ENCODE measurements at regions of chr9 and their contacts with region 1.

Region 1: GRCh38 chr9:69672596-69673310 is 582 bp upstream of the APBA1 start:
- DNase-seq: peak; percentile 69 to 88 (median 82)
- H3K4me3 ChIP-seq: peak overlapping the region; percentile 66 to 96 (median 88)
- H3K27ac ChIP-seq: peak overlapping the region; percentile 80 to 98 (median 96)
- H3K27me3 ChIP-seq: no peaks in the 10 kb centered on the region
- CTCF ChIP-seq: peak; percentile 66 to 92 (median 83)

Region 2: GRCh38 chr9:69346998-69347397 is 325.8 kb before region 1 on chr9:
- intact Hi-C with region 1: no loop called
- DNase-seq: no peak
- H3K4me3 ChIP-seq: no peak overlapping the region
- H3K27ac ChIP-seq: no peak overlapping the region
- H3K27me3 ChIP-seq: peaks cover 0 to 3% (median 0%) of the 10 kb centered on the region in 45 donors
- CTCF ChIP-seq: no peak

Region 3: GRCh38 chr9:69421908-69422801 is 250.6 kb before region 1 on chr9:
- intact Hi-C with region 1: loop called (anchors 2 to 5 kb)
- DNase-seq: peak in 9 of 10 donors; percentile 56 to 75 (median 65)
- H3K4me3 ChIP-seq: no peak overlapping the region
- H3K27ac ChIP-seq: no peak overlapping the region
- H3K27me3 ChIP-seq: no peaks in the 10 kb centered on the region
- CTCF ChIP-seq: peak; percentile 59 to 94 (median 86)

Region 4: DNA sequence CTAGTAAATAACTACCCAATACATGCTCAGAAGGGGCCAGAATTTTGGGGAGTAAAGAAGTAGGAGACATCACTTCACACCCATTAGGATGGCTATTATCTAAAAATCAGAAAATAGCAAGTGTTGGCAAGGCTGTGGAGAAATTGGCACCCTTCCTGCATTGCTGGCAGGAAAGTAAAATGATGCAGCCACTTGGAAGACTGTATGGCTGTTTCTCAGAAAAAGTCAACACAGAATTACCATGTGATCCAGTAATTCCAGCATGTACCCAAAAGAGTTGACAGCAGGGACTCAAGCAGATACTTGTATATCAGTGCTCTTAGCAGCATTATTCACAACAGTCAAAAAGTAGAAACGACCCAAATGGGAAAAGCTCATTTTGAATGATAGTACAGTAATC is 108.2 kb before region 1 on chr9:
- intact Hi-C with region 1: loop called in 1 of 2 experiments (anchors 10 kb)
- DNase-seq: peak in 1 of 10 donors; percentile 61
- H3K4me3 ChIP-seq: no peak overlapping the region
- H3K27ac ChIP-seq: peak overlapping the region in 1 of 59 donors; percentile 12
- H3K27me3 ChIP-seq: no peaks in the 10 kb centered on the region
- CTCF ChIP-seq: no peak

Region 5: GRCh38 chr9:69627281-69627680 is 45.5 kb before region 1 on chr9:
- intact Hi-C with region 1: no loop called
- DNase-seq: no peak
- H3K4me3 ChIP-seq: no peak overlapping the region
- H3K27ac ChIP-seq: no peak overlapping the region
- H3K27me3 ChIP-seq: no peaks in the 10 kb centered on the region
- CTCF ChIP-seq: no peak

Region 6: DNA sequence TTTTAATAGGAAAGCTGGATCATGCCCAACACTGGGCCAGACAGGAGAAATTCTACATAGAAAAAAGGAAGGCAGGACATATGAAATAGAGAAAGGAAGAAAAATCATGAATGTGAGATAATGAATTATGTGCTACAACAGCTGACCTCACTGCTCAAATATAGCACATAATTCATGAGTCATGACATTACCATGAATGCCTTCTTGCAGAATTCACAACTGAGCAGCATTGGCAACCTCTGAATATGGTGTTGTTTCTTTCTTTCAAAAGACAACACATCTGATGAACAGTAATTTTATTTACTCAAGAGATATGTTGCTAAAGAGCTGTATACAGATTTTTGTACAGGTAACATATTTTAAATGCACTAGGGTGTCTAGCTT is 34.9 kb before region 1 on chr9:
- intact Hi-C with region 1: loop called in 1 of 2 experiments (anchors 5 kb)
- DNase-seq: no peak
- H3K4me3 ChIP-seq: no peak overlapping the region
- H3K27ac ChIP-seq: peak overlapping the region in 26 of 59 donors; percentile 0 to 72 (median 18)
- H3K27me3 ChIP-seq: no peaks in the 10 kb centered on the region
- CTCF ChIP-seq: no peak

Region 7: DNA sequence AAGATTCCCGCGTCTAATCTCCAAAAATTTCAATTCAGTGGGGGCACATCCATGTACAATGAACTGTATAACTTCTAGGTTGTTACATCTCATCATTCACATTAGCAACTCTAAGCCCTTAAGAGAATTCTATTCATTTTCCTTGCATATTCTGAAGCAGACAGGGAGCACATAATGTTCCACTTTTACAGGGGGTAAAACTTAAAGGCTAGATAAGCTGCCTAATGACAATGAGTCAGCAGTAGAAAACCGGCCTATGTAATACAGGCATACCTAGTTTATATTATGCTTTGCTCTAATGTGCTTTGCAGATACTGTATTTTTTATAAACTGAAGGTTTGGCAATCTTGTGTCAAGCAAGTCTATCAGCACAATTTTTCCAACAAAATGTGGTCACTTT is 46.6 kb after region 1 on chr9:
- intact Hi-C with region 1: no loop called
- DNase-seq: no peak
- H3K4me3 ChIP-seq: no peak overlapping the region
- H3K27ac ChIP-seq: no peak overlapping the region
- H3K27me3 ChIP-seq: no peaks in the 10 kb centered on the region
- CTCF ChIP-seq: no peak

Region 8: DNA sequence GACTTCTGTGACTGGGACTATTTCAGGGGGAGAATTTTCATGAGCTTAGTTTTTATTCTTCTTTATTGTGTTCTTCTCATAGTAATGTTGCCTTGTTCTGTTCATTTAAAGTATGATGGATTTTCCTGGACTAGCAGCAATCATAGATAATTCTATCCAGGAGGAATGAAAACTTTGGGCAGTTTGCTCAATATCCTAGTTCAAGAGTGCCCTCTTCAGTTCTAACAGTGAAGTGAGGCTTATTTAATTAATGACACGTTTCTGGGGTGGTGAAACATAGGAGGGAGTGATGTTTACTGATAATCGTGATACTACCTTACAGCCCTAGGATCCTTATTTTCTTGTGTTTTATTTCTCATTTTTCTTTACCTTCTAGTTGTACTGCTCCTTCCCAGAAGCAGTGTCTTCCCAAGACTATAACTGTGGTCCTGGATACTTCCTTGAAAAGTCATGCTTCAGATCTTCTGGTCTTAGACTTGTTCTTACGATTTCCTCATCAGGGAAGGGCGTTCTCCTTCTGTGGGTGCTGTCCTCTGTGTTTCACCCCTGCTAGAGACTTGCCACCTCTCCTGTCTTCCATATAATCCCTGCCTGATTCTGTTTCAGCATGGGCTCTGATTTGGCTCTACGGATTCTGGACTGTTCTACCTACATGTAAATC is 205.2 kb after region 1 on chr9:
- intact Hi-C with region 1: loop called (anchors 5 to 10 kb)
- DNase-seq: no peak
- H3K4me3 ChIP-seq: no peak overlapping the region
- H3K27ac ChIP-seq: no peak overlapping the region
- H3K27me3 ChIP-seq: no peaks in the 10 kb centered on the region
- CTCF ChIP-seq: peak; percentile 39 to 84 (median 67)

Region 9: GRCh38 chr9:69932901-69933300 is 260.1 kb after region 1 on chr9:
- intact Hi-C with region 1: loop called in 1 of 2 experiments (anchors 5 kb)
- DNase-seq: peak in 1 of 10 donors; percentile 7
- H3K4me3 ChIP-seq: no peak overlapping the region
- H3K27ac ChIP-seq: no peak overlapping the region
- H3K27me3 ChIP-seq: peaks cover 0 to 3% (median 0%) of the 10 kb centered on the region in 45 donors
- CTCF ChIP-seq: peak in 32 of 56 donors; percentile 10 to 49 (median 27)

Region 10: DNA sequence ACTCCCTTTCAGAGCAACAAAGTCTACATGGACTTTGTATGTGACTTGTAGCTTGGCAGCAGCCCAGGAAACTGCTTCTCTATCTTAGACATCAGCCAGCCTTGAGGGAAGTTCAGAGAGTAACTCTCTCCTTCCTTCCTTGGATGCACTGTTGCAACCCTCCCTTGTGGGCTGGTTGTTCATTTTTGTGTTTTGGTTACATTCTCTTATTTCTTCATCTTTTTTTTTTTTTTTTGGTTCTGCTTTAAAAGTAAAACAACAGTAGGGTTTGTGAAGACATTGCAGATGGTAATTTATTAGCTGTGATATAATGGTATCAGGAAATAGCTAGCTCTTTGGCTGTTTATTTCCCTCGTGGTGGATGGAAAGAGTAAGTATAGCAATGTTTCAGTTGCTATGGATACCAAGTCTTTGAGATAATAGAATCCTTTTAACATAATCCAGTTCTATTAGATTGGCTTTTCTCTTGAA is 273.0 kb after region 1 on chr9:
- intact Hi-C with region 1: no loop called
- DNase-seq: no peak
- H3K4me3 ChIP-seq: no peak overlapping the region
- H3K27ac ChIP-seq: no peak overlapping the region
- H3K27me3 ChIP-seq: no peaks in the 10 kb centered on the region
- CTCF ChIP-seq: no peak